PC-3 (cell line): ENCODE measurements at regions of chr20 and their contacts with region 1.

Region 1: GRCh38 chr20:22575087-22575721 is 9.2 kb downstream of the FOXA2 start:
- DNase-seq: peak; percentile 59
- ATAC-seq: peak; percentile 32
- H3K4me3 ChIP-seq: no peak overlapping the region; the same call in 1 of the 2 replicates
- H3K27ac ChIP-seq: peak overlapping the region; percentile 80
- H3K4me1 ChIP-seq: peaks cover 21% of the 10 kb centered on the region
- H3K27me3 ChIP-seq: 0 out of 2 replicates have a peak, but pooled peaks cover 6% of the 10 kb centered on the region
- CTCF ChIP-seq: no peak

Region 2: DNA sequence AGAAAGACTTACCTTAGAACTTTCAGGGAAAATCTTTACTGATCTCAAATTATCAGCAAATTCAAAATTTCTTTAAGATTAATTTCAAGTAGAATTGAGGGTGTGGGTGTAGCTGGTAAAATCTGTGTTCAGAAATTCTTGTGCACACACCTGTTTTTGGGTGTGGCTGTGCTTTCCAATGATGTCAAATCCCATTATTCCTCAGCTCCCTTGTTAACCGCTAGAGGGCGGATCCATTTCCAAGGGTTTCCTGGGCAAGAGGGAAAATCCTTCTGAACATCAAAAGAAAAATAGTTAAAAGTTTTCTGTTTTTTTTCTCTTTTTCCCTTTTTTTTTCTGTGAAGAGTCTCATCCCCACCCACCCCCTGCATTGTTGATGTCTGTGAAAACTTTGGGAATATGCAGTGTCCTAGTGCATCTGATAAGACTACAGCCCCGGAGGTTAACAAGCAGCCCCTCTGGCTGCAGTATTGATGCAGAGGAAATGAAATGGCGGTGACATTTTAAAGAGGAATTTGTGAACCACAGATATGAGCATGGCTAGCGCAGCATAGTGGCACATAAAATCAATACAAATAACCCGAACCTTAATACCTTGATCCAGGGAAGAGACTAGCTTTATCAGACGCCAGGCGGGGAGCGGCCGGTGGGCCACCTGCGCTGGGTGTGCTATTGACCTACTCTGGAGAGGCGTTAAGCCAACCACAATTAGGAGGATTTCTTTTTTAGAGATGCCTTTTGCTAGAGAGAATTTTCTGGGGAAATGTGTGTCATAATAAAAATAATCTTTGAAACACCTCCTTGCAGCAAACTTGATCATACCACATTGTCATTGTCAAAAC is 121.7 kb before region 1 on chr20:
- CTCF ChIA-PET with region 1: interaction called, 7 read pairs
- POLR2A ChIA-PET with region 1: no interaction called
- intact Hi-C with region 1: loop called (anchors 5 kb)
- DNase-seq: peak; percentile 78
- ATAC-seq: peak; percentile 39; the same call in 1 of the 2 replicates
- H3K4me3 ChIP-seq: no peak overlapping the region
- H3K27ac ChIP-seq: no peak overlapping the region
- H3K4me1 ChIP-seq: peaks cover 8% of the 10 kb centered on the region; the same call in 1 of the 2 replicates
- H3K27me3 ChIP-seq: no peaks in the 10 kb centered on the region
- CTCF ChIP-seq: peak; percentile 94

Region 3: DNA sequence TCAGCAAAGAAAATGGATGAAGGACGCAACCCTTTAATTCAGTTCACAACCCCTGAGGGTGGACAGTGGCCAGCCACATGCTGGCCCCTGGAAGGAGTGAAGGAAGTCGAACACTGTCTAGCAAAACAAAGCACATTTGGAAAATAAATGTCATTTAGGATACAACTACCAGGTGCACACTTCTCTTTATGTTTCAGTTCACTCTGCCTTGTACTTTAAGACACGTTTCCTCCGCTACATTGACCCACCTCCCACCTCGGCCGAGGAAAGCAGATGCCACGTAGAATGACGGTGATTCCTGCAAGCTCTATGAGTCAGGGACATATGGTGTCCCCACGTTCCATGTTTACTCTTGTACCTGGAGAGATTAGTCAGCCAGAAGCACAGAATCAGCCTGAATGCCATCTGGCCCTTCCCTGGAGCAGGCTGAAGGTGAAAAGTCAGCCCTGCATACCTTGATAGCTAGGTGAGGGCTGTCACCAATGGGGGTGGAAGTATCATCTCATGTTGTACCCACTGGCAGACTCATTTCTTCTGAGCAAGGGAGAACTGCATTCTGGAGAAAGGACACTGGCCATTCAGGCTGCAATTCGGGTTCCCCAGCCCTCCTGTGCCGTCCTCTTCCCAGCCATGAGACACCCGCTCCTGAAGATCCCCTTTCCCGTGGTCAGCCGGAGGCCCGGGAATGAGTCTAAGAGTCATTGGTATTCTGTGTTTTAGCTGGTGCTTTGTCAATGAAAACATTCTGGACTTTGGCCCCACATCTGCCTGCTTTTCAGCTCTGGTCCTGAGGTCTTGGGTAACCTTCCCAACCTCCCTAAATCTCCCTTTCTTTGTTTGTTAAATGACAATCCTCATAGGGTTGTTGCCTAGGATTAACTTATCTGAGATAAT is 51.5 kb before region 1 on chr20:
- CTCF ChIA-PET with region 1: no interaction called
- POLR2A ChIA-PET with region 1: no interaction called
- intact Hi-C with region 1: no loop called
- DNase-seq: peak; percentile 82
- ATAC-seq: peak; percentile 95
- H3K4me3 ChIP-seq: no peak overlapping the region
- H3K27ac ChIP-seq: peak overlapping the region; percentile 31
- H3K4me1 ChIP-seq: peaks cover 22% of the 10 kb centered on the region
- H3K27me3 ChIP-seq: no peaks in the 10 kb centered on the region
- CTCF ChIP-seq: no peak